ENCODE measurements at regions of chr13 and their contacts with region 1.

Region 1: GRCh38 chr13:51070005-51070649 is 40.9 kb downstream of the C13orf42 start:
- DNase-seq: peak; percentile 89
- ATAC-seq: peak; percentile 84

Region 2: GRCh38 chr13:49976314-49977258 is 1093.5 kb before region 1 on chr13:
- intact Hi-C with region 1: loop called (anchors 2 kb)
- DNase-seq: peak; percentile 88
- ATAC-seq: peak; percentile 50

Region 3: DNA sequence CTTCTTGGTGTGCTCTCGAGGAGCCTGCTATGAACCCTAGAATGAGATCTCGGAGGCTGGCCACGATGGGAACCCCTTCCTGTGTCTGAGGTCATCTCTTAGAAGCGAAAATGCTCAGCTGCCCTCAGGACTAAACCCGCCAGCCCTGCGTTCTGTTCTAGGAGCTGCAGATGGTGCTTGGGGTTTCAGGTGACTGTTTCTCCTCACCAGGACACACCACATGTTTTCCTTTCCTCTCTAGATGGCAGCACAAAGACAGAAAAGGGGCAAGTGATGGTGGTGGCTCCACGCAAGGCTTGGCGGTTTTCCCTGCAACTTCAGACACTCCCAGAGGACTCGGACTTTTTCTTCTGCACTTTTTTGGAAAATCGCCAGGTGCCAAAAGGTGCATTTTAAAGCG is 100.4 kb before region 1 on chr13:
- intact Hi-C with region 1: loop called (anchors 5 kb)
- DNase-seq: no peak
- ATAC-seq: no peak